GM12878 (cell line): ENCODE measurements at regions of chr2 and their contacts with region 1.

Region 1: DNA sequence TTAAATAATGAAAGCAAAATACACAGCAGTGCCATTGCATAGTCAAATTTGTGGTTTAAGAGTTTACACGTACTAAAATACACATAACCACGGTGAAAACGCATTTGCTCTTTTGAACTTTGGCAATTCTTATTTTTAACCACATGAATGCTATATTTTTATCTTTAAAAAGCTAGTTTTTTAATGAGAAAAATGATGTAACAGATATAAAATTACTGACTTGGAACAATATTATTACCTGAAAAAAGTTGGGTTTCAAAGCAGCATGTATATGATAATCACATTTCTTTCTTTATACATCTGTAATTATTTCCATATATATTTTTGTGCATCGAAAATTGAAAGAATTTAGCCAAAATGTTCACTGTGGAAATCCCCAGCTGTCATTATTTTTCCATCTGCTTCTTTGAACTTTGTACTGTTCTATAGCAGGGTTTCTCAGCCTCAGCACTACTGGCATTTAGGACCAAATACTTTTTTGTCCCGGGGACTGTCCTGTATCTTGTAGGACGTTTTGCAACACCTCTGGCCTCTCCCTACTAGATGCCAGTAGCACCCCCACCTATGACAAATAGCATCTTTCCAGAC is 75.9 kb upstream of the CAB39 start:
- DNase-seq: no peak
- ATAC-seq: peak; percentile 70
- H3K4me3 ChIP-seq: no peak overlapping the region
- H3K27ac ChIP-seq: peak overlapping the region; percentile 54
- H3K4me1 ChIP-seq: peaks cover 14% of the 10 kb centered on the region
- H3K27me3 ChIP-seq: no peaks in the 10 kb centered on the region
- CTCF ChIP-seq: no peak
- EP300 ChIP-seq: peak in 1 of 2 experiments; percentile 73; a peak in 2 of 4 replicates
- POLR2A ChIP-seq: no peak
- RAD21 ChIP-seq: no peak

Region 2: GRCh38 chr2:230377071-230377470 is 259.7 kb before region 1 on chr2:
- CTCF ChIA-PET with region 1: no interaction called
- POLR2A ChIA-PET with region 1: no interaction called
- RAD21 ChIA-PET with region 1: no interaction called
- SMC1A ChIA-PET with region 1: no interaction called
- in situ Hi-C with region 1: no loop called
- intact Hi-C with region 1: no loop called
- DNase-seq: no peak
- ATAC-seq: no peak
- H3K4me3 ChIP-seq: no peak overlapping the region
- H3K27ac ChIP-seq: no peak overlapping the region
- H3K4me1 ChIP-seq: no peaks in the 10 kb centered on the region
- H3K27me3 ChIP-seq: no peaks in the 10 kb centered on the region
- CTCF ChIP-seq: no peak
- EP300 ChIP-seq: no peak
- POLR2A ChIP-seq: no peak
- RAD21 ChIP-seq: no peak

Region 3: GRCh38 chr2:230650585-230651137 is 13.9 kb after region 1 on chr2:
- CTCF ChIA-PET with region 1: interaction called, 11 read pairs
- POLR2A ChIA-PET with region 1: interaction called, 45 read pairs
- RAD21 ChIA-PET with region 1: interaction called, 20 read pairs
- SMC1A ChIA-PET with region 1: interaction called, 75 read pairs
- in situ Hi-C with region 1: no loop called
- intact Hi-C with region 1: no loop called
- DNase-seq: peak; percentile 93
- ATAC-seq: peak; percentile 97
- H3K4me3 ChIP-seq: peak overlapping the region; percentile 0; the same call in 1 of the 2 replicates
- H3K27ac ChIP-seq: peak overlapping the region; percentile 54
- H3K4me1 ChIP-seq: peaks cover 12% of the 10 kb centered on the region
- H3K27me3 ChIP-seq: no peaks in the 10 kb centered on the region
- CTCF ChIP-seq: no peak
- EP300 ChIP-seq: peak; percentile 33 to 68; a peak in 2 of 4 replicates
- POLR2A ChIP-seq: no peak
- RAD21 ChIP-seq: peak; percentile 22; the same call in 1 of the 2 replicates